PC-9 (cell line): ENCODE measurements at regions of chr7 and their contacts with region 1.

Region 1: GRCh38 chr7:142375666-142376313 is 117.9 kb upstream of the PRSS58 start:
- DNase-seq: peak; percentile 99 to 100
- H3K4me3 ChIP-seq: peak overlapping the region; percentile 8; the same call in 1 of the 2 replicates
- H3K27ac ChIP-seq: peak overlapping the region; percentile 87
- H3K4me1 ChIP-seq: peaks cover 54% of the 10 kb centered on the region
- H3K27me3 ChIP-seq: no peaks in the 10 kb centered on the region
- CTCF ChIP-seq: peak; percentile 97

Region 2: DNA sequence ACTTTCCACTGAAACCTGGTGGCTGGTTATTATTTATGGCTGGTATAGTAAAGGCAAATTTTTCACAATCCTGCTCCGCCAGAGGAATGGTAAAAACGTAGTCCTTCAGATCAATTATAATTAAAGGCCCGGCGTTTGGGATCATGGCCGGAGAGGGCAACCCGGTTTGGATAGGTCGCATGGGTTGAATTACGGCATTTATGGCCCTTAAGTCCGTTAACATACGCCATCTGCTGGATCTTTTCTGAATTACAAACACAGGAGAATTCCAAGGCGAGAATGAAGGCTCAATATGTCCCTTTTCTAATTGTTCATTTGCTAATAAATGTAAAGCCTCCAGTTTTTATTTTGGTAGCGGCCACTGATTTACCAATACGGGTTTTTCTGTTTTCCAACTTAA is 623.2 kb before region 1 on chr7:
- CTCF ChIA-PET with region 1: no interaction called
- POLR2A ChIA-PET with region 1: no interaction called
- intact Hi-C with region 1: no loop called
- DNase-seq: no peak
- H3K4me3 ChIP-seq: 0 out of 2 replicates have a peak overlapping the region, but pooled peaks have one; percentile 19
- H3K27ac ChIP-seq: no peak overlapping the region
- H3K4me1 ChIP-seq: no peaks in the 10 kb centered on the region
- H3K27me3 ChIP-seq: no peaks in the 10 kb centered on the region
- CTCF ChIP-seq: peak; percentile 70

Region 3: DNA sequence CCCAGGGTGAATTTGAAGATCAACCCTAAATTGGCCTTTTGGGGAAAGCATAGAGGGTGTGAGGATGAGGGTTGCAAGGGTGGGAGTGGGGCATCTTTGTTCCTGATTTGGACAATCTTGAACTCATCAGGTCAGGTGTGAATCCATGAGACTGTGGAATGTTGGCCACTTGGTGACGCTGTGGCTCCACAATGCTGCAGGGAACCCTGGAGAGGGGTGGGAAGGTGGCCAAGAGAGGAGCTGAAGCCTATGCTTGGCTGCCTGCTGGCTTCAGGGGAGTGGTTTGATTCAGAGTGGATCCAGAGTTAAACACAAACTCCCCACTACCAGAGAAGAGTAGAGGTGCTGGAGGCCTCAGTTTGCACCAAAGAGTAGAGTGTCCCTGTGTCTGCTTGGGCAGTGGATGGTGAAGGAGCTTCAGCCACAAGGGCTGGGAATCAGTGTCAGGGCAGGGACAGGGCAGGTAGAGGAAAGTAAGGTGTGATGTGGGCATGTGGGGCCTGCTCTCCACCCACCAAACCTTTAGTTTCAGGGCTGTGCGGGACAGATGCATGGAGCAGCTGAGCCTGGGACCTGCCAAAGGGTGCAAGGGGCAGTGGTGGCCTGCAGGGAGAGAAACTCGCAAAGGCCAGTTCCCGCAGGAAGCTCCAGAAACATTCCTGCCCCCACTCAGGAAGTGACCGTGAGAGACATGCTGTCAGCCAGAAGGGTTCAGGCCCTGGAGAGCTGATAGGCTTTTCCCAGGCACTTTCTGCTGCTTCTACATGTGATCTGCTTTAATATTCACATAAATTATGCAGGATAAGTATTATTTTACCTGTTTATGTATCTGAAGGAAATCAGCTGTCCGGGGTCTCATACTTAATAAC is 36.9 kb before region 1 on chr7:
- CTCF ChIA-PET with region 1: interaction called, 14 read pairs
- POLR2A ChIA-PET with region 1: interaction called, 5 read pairs
- intact Hi-C with region 1: loop called (anchors 1 kb)
- DNase-seq: peak; percentile 61 to 88
- H3K4me3 ChIP-seq: no peak overlapping the region
- H3K27ac ChIP-seq: no peak overlapping the region
- H3K4me1 ChIP-seq: no peaks in the 10 kb centered on the region
- H3K27me3 ChIP-seq: no peaks in the 10 kb centered on the region
- CTCF ChIP-seq: peak; percentile 76

Region 4: GRCh38 chr7:142440219-142440905 is 64.6 kb after region 1 on chr7:
- CTCF ChIA-PET with region 1: interaction called, 11 read pairs
- POLR2A ChIA-PET with region 1: no interaction called
- intact Hi-C with region 1: no loop called
- DNase-seq: peak; percentile 67 to 90
- H3K4me3 ChIP-seq: peak overlapping the region; percentile 16; the same call in 1 of the 2 replicates
- H3K27ac ChIP-seq: peak overlapping the region; percentile 79
- H3K4me1 ChIP-seq: peaks cover 46% of the 10 kb centered on the region
- H3K27me3 ChIP-seq: no peaks in the 10 kb centered on the region
- CTCF ChIP-seq: no peak

Region 5: DNA sequence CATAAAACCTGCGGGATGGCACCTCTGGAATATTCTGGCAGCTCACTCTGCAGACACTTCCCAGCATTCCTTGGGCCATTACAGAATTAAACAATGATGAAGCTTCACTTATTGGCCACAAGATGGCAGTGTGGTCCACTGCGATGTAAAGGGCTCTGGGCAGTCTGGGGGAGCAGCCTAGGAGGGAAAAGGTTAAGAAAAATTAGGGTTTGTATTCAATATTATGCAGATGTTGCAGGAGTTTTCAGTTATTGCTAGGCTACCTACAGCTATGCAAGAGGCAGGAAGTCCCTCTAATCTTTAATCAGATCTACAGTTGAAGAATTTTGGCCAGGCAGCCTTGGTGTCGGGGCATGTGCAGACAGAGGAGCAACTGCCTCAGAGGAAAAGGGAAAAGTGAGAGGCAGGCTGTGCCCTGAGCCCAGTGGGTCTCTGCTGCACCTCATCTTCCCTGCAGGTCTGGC is 140.3 kb after region 1 on chr7:
- CTCF ChIA-PET with region 1: interaction called, 3 read pairs
- POLR2A ChIA-PET with region 1: no interaction called
- intact Hi-C with region 1: loop called (anchors 1 kb)
- DNase-seq: peak; percentile 72 to 87
- H3K4me3 ChIP-seq: no peak overlapping the region
- H3K27ac ChIP-seq: peak overlapping the region; percentile 79
- H3K4me1 ChIP-seq: peaks cover 48% of the 10 kb centered on the region
- H3K27me3 ChIP-seq: no peaks in the 10 kb centered on the region
- CTCF ChIP-seq: peak; percentile 97

Region 6: GRCh38 chr7:142760071-142760642 is 384.4 kb after region 1 on chr7:
- CTCF ChIA-PET with region 1: no interaction called
- POLR2A ChIA-PET with region 1: no interaction called
- intact Hi-C with region 1: no loop called
- DNase-seq: peak; percentile 55 to 94
- H3K4me3 ChIP-seq: no peak overlapping the region
- H3K27ac ChIP-seq: peak overlapping the region; percentile 65
- H3K4me1 ChIP-seq: peaks cover 22% of the 10 kb centered on the region
- H3K27me3 ChIP-seq: no peaks in the 10 kb centered on the region
- CTCF ChIP-seq: no peak

Region 7: DNA sequence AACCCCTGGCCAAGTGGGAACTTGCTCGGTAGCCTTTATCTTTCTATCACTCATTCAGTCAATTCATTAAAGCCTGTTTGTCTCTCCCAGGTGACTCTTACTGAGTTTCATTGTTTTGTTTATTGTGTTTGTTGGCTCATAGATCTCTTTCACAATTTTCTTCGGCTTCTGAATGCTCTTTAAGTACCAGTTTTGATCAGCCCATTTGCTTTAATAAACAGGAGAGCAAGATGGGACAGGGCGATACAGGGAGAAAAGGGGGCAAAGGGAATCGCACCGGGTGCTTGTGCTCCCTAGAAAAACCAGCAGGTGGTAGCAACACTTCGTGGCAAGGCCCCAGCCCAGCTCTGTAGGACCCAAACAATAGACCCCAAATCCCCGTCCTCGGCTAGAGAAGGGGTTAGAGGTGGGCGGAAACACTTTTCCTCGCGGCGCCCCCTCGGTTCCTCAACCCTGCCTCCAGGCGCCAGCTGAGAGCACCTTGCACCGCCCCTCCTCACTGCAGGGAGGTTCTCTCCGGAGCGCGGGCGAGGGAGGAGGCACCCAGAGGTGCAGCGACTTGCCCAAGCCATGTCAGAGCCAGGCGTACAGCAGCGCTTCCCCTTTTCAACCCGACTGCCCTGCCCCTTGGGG is 478.1 kb after region 1 on chr7:
- CTCF ChIA-PET with region 1: no interaction called
- POLR2A ChIA-PET with region 1: no interaction called
- intact Hi-C with region 1: loop called (anchors 2 kb)
- DNase-seq: peak; percentile 78 to 85
- H3K4me3 ChIP-seq: peak overlapping the region; percentile 95
- H3K27ac ChIP-seq: peak overlapping the region; percentile 83
- H3K4me1 ChIP-seq: peaks cover 40% of the 10 kb centered on the region
- H3K27me3 ChIP-seq: no peaks in the 10 kb centered on the region
- CTCF ChIP-seq: peak; percentile 92

Region 8: GRCh38 chr7:143214789-143215679 is 839.2 kb after region 1 on chr7:
- CTCF ChIA-PET with region 1: interaction called, 3 read pairs
- POLR2A ChIA-PET with region 1: no interaction called
- intact Hi-C with region 1: loop called (anchors 1 kb)
- DNase-seq: peak; percentile 61 to 76
- H3K4me3 ChIP-seq: no peak overlapping the region
- H3K27ac ChIP-seq: no peak overlapping the region
- H3K4me1 ChIP-seq: no peaks in the 10 kb centered on the region
- H3K27me3 ChIP-seq: no peaks in the 10 kb centered on the region
- CTCF ChIP-seq: peak; percentile 100